IMR-90 (cell line): ENCODE measurements at regions of chr1 and their contacts with region 1.

Region 1: DNA sequence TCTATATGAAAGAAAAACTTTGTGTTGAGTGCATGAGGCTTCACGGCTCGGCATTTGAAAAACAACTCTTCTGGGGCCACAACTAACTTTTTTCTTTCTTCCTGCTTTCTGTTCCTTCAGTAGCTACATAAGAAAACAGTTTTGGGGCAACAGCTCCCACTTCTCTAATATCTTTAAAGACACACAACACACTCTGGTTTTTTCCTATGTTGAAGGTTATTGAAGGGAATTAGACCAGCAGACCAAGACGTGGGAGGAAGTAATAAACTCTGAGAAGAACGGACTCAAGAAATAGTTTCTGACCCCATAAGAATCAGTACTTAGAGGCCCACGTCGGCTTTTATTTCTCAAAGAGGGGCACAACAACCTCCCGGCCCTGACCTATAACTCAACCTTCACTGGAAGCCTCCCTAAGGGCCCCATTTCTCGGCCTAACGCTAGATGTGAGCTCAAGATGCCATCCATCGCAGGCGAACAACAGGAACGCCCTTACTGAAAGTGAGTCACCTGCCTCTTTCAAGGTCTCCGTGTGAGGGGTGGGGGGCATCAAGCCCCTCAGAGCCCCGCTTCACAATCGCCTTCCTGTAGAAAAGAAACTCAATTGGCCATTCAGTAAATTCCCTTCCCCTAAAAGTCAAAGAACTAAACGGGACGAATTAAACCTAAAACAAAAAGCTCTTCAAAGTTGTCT is 844 bp downstream of the ZMYM6 start:
- DNase-seq: peak; percentile 49
- ATAC-seq: peak; percentile 24; the same call in 1 of the 2 replicates
- H3K4me3 ChIP-seq: peak overlapping the region; percentile 58
- H3K27ac ChIP-seq: peak overlapping the region; percentile 80
- H3K4me1 ChIP-seq: peaks cover 4% of the 10 kb centered on the region
- H3K27me3 ChIP-seq: no peaks in the 10 kb centered on the region
- CTCF ChIP-seq: no peak
- POLR2A ChIP-seq: no peak
- RAD21 ChIP-seq: no peak

Region 2: DNA sequence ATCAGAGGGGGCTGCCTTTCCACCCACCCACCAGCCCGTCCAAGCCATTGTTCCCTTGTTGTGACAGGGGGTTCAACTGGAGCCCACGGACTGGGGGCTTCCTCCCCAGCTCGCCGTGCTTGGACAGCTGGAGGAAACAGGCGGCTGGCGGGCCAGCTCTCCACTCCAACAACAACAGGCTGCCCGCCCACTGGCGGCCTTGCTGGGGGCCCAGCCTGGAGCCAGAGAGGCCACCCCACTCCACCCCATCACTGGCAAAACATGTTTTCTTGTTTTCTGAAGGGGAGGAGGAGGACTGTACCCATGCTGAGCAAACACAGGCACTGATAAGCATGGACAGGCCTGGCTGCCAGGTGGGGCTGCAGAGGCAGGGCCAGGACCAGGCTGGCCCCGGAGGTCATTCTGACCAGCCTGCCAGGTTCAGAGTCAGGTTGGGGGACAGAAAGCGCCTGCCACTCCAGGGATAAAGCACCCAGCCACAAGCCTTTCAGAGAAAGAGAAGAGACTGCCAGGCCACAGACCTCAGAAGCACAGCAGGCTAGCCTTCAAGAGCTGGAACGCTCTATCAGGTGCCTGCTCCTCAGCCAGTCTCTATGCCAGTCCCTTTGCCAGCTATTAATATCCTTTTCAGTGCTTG is 205.3 kb before region 1 on chr1:
- CTCF ChIA-PET with region 1: no interaction called
- POLR2A ChIA-PET with region 1: no interaction called
- dilution Hi-C with region 1: no loop called
- in situ Hi-C with region 1: no loop called
- intact Hi-C with region 1: no loop called
- DNase-seq: no peak
- ATAC-seq: no peak
- H3K4me3 ChIP-seq: no peak overlapping the region
- H3K27ac ChIP-seq: no peak overlapping the region
- H3K4me1 ChIP-seq: no peaks in the 10 kb centered on the region
- H3K27me3 ChIP-seq: no peaks in the 10 kb centered on the region
- CTCF ChIP-seq: no peak
- POLR2A ChIP-seq: no peak
- RAD21 ChIP-seq: no peak

Region 3: GRCh38 chr1:35079003-35079930 is 48.4 kb after region 1 on chr1 and contains the start of gene ZMYM1:
- CTCF ChIA-PET with region 1: no interaction called
- POLR2A ChIA-PET with region 1: no interaction called
- dilution Hi-C with region 1: no loop called
- in situ Hi-C with region 1: no loop called
- intact Hi-C with region 1: loop called (anchors 2 kb)
- DNase-seq: peak; percentile 83
- ATAC-seq: peak; percentile 99
- H3K4me3 ChIP-seq: peak within 1 kb of the TSS; percentile 84
- H3K27ac ChIP-seq: peak within 1 kb of the TSS; percentile 86
- H3K4me1 ChIP-seq: peaks cover 2% of the 10 kb centered on the region; the same call in 1 of the 2 replicates
- H3K27me3 ChIP-seq: no peaks in the 10 kb centered on the region
- CTCF ChIP-seq: no peak
- POLR2A ChIP-seq: peak; percentile 64
- RAD21 ChIP-seq: no peak
- total RNA-seq, gene ZMYM1: 26.1 and 33.9 TPM in 2 replicates

Region 4: DNA sequence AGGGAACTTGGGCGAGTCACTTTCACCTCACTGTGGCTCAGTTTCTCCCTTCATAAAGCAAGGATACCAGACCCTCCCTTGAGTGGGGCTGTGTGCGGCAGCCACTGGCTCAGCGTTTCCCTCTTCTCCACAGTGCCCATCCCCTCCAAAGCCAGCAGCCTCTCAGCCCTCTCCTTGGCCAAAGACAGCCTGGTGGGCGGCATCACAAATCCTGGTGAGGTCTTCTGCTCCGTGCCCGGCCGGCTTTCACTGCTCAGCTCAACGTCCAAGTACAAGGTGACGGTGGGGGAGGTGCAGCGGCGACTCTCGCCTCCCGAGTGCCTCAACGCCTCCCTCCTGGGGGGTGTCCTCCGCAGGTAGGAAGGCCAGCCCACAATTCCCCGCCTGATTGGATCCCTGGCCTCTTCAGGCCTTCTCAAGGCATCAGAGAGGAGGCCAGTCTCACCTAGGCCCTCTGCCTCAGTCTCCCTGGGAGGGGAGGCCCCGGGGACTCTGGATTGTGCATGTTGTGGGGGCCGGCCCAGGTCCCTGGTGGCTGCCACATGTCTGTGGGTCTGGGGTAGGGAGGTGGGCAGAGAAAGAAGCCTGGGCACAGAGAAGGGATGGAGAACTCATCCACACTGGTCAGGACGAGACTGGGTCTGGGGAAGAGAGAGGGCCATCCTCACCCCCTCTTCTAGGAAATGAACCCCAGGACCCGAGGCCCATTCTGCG is 557.5 kb after region 1 on chr1:
- CTCF ChIA-PET with region 1: no interaction called
- POLR2A ChIA-PET with region 1: no interaction called
- dilution Hi-C with region 1: no loop called
- in situ Hi-C with region 1: no loop called
- intact Hi-C with region 1: no loop called
- DNase-seq: no peak
- ATAC-seq: no peak
- H3K4me3 ChIP-seq: no peak overlapping the region
- H3K27ac ChIP-seq: no peak overlapping the region
- H3K4me1 ChIP-seq: no peaks in the 10 kb centered on the region
- H3K27me3 ChIP-seq: no peaks in the 10 kb centered on the region
- CTCF ChIP-seq: no peak
- POLR2A ChIP-seq: no peak
- RAD21 ChIP-seq: no peak